OCI-LY7 (cell line): ENCODE measurements at regions of chr7 and their contacts with region 1.

Region 1: DNA sequence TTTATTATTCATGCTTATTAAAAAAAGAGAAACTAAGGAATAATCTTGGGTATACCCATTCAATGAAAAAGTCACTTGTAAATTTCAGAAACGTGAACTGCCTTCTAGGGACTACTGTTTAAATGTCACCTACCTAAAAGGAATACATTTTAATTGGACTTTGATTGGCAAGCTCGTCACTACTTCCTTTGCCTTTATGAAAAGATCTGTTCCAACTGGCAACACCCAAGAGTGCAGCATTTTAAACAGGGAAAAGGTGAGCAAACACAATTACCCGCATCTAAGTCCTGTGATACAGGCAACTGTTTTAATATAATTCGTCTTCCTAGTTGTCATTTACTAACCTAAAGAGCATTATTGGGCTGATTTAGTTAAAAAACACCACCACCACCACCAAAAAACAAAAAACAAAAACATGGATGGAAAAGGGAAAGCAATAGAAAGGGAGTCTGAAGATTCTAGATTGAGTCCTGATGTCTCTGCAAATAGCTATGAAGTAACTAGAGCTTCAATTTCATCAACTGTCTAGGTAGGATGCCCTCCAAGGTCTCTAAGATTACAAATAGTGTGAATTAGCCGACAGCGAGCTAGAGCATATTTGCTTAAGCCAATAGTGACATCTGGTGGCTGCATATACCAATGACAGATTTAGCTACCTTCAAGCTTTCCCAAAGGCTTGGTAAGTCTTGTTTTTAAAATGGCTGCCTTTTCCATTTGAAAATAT is 33.8 kb upstream of the ICA1 start:
- DNase-seq: peak; percentile 79
- H3K4me3 ChIP-seq: no peak overlapping the region
- H3K27ac ChIP-seq: no peak overlapping the region
- H3K4me1 ChIP-seq: no peaks in the 10 kb centered on the region
- CTCF ChIP-seq: peak; percentile 87

Region 2: GRCh38 chr7:7521259-7521658 is 774.5 kb before region 1 on chr7:
- CTCF ChIA-PET with region 1: no interaction called
- POLR2A ChIA-PET with region 1: no interaction called
- intact Hi-C with region 1: loop called (anchors 10 kb)
- DNase-seq: no peak
- H3K4me3 ChIP-seq: no peak overlapping the region
- H3K27ac ChIP-seq: no peak overlapping the region
- H3K4me1 ChIP-seq: no peaks in the 10 kb centered on the region
- CTCF ChIP-seq: no peak

Region 3: GRCh38 chr7:7595451-7595850 is 700.3 kb before region 1 on chr7:
- CTCF ChIA-PET with region 1: no interaction called
- POLR2A ChIA-PET with region 1: no interaction called
- intact Hi-C with region 1: loop called (anchors 5 kb)
- DNase-seq: peak; percentile 55
- H3K4me3 ChIP-seq: no peak overlapping the region
- H3K27ac ChIP-seq: no peak overlapping the region
- H3K4me1 ChIP-seq: no peaks in the 10 kb centered on the region
- CTCF ChIP-seq: peak; percentile 80